Prostate gland (tissue), 2 donors: ENCODE measurements at regions of chr3 and their contacts with region 1.

Region 1: GRCh38 chr3:23916886-23917678 is at the starts of genes NKIRAS1 and RPL15:
- DNase-seq: peak; percentile 97
- H3K4me3 ChIP-seq: peak within 1 kb of the TSS; percentile 61 to 80
- H3K27ac ChIP-seq: peak within 1 kb of the TSS; percentile 87 to 89
- H3K4me1 ChIP-seq: peaks cover 3% of the 10 kb centered on the region
- H3K27me3 ChIP-seq: no peaks in the 10 kb centered on the region
- CTCF ChIP-seq: peak; percentile 33 to 93 (median 70)
- POLR2A ChIP-seq: peak; percentile 95
- total RNA-seq, gene NKIRAS1: 9.4 to 19.9 TPM
- total RNA-seq, gene RPL15: 2,124 to 2,276 TPM

Region 2: GRCh38 chr3:23945903-23946751 is 29.0 kb after region 1 on chr3:
- intact Hi-C with region 1: loop called (anchors 1 kb)
- DNase-seq: peak; percentile 98
- H3K4me3 ChIP-seq: peak overlapping the region; percentile 72 to 82
- H3K27ac ChIP-seq: peak overlapping the region; percentile 89 to 99
- H3K4me1 ChIP-seq: peaks cover 8% of the 10 kb centered on the region
- H3K27me3 ChIP-seq: no peaks in the 10 kb centered on the region
- CTCF ChIP-seq: peak in 1 of 4 experiments; percentile 37
- POLR2A ChIP-seq: peak; percentile 73